Activated T-helper 1 cell treated with anti-CD3 and anti-CD28 coated beads, Interleukin-12 subunit alpha, Interleukin-12 subunit beta, Interleukin-2, Interleukin-4 antibody, amounts not matched to agents 30 ng/mL and 10 ng/mL and 1 ng/mL, durations not matched to agents 14 hours and 24 hours and 36 hours (primary cell): ENCODE measurements at regions of chr2 and their contacts with region 1.

Region 1: GRCh38 chr2:100142393-100142792 is at the start of gene AFF3:
- DNase-seq: peak; percentile 38
- H3K4me3 Mint-ChIP-seq: peak within 1 kb of the TSS; percentile 71
- H3K27ac Mint-ChIP-seq: peak within 1 kb of the TSS; percentile 52
- H3K4me1 Mint-ChIP-seq: peaks cover 46% of the 10 kb centered on the region
- H3K27me3 Mint-ChIP-seq: peaks cover 42% of the 10 kb centered on the region
- total RNA-seq, gene AFF3: 1.7 and 2.4 TPM in 2 replicates

Region 2: DNA sequence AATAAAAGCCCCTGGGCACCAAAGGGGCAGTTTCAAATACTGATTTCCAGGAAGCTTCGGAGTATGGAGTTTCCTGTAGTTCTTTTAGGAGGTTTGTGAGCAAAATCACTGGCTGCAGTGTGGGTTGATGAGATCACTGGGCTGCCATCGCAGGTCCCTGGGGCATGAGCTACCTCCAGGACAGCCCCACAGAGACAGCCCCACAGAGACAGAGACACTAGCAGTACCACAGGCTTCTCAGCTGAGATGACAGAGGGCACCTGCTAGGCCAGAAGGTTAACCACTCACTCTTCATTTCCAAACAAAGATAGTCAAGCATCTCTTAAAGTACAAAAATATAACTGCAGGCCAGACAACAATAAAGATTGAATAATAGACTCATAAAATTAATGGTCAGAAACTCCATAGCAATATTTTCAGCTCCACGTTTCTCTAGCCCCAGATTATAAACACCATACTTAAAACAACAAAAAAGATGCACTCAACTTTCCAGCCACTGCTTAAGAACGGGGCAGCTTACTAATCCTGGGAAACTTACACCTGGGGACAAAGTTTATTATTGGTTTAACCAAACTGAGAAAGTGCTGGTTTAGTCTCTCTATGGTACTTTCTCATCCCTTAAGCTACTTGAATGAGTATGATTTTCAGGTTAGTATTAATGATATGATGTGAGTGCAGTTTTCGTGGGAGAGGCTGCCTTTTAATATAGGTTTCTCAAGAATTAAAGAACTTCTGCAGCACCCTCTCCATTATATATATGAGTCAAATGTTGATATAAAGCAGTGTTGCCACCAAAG is 11.6 kb before region 1 on chr2:
- intact Hi-C with region 1: loop called (anchors 1 kb)
- DNase-seq: no peak
- H3K4me3 Mint-ChIP-seq: no peak overlapping the region
- H3K27ac Mint-ChIP-seq: peak overlapping the region; percentile 25
- H3K4me1 Mint-ChIP-seq: peaks cover 5% of the 10 kb centered on the region
- H3K27me3 Mint-ChIP-seq: peaks cover 4% of the 10 kb centered on the region

Region 3: DNA sequence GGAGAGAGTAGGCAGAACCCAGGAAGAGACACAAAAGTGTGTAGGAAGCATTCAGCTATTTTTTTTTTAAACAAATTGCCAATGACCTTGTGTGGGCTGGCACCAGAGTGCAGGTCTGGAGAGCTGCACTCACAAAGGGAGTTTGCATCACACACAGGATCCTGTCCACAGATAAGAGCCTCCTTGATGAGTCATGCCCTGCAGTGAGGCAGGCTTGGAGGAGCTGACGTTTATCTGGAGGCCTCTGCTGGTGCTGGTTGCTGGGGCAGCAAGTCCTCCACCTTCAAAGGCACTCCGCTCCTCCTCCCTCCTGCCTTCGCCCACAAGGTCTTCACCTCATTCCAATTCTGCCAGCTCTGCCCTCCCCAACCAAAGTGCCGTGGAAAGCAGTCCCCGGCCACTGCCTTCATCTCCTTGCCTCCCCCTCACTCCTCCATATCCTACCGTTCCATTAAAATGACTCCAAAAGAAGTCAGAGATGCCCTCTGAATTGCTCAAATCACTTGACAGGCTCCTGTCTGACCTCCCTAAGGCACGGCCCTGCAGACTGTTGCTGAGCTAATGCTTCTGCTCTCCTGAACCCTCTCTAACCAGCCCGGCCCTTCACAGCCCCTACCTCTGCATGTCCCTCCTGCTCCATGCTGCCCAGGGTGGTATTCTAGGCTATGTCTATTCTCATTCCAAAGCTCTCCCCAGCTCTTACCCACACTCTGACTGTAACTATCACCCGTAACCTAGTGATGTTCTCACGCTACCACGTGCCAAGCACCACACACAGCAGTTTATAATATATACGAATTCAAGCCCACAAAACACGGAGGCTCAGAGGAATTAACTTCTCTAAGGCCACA is 149.0 kb after region 1 on chr2:
- intact Hi-C with region 1: loop called (anchors 5 kb)
- DNase-seq: peak; percentile 61
- H3K4me3 Mint-ChIP-seq: no peak overlapping the region
- H3K27ac Mint-ChIP-seq: no peak overlapping the region
- H3K4me1 Mint-ChIP-seq: peaks cover 6% of the 10 kb centered on the region
- H3K27me3 Mint-ChIP-seq: peaks cover 13% of the 10 kb centered on the region